Body of pancreas (tissue), 4 donors: ENCODE measurements at regions of chr5 and their contacts with region 1.

Region 1: DNA sequence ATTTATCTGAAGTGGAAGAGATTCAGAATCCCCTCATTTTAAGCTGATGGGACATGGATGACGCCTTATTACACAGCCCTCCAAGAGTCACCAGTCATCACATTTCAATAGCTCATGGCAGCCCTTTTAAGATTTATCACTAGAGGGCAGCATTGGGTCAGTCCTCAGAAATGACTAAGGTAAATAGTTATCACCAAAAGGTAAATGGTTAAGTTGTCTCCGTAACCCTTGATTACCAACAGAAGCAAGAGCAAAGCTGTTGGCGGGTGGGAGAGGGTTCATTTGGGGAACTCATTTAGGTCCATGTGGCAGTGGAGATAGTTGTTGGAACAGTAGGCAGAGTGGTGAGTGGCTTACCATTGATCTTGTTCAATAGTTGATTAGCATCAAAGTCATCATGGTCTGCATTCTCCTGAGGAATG is 12.0 kb upstream of the C9 start:
- DNase-seq: peak; percentile 34 to 60 (median 48)
- ATAC-seq: peak; percentile 51
- H3K4me3 ChIP-seq: no peak overlapping the region
- H3K27ac ChIP-seq: no peak overlapping the region
- H3K4me1 ChIP-seq: peaks cover 11% of the 10 kb centered on the region
- H3K27me3 ChIP-seq: no peaks in the 10 kb centered on the region
- CTCF ChIP-seq: peak; percentile 61 to 82 (median 77)
- POLR2A ChIP-seq: no peak

Region 2: GRCh38 chr5:39547553-39548154 is 171.3 kb after region 1 on chr5:
- intact Hi-C with region 1: loop called (anchors 5 kb)
- DNase-seq: peak; percentile 20 to 58 (median 38)
- ATAC-seq: peak; percentile 83
- H3K4me3 ChIP-seq: no peak overlapping the region
- H3K27ac ChIP-seq: peak overlapping the region in 1 of 4 donors; percentile 27
- H3K4me1 ChIP-seq: no peaks in the 10 kb centered on the region
- H3K27me3 ChIP-seq: no peaks in the 10 kb centered on the region
- CTCF ChIP-seq: peak; percentile 41 to 80 (median 69)
- POLR2A ChIP-seq: no peak